ENCODE measurements at regions of chr1 and their contacts with region 1.

Region 1: DNA sequence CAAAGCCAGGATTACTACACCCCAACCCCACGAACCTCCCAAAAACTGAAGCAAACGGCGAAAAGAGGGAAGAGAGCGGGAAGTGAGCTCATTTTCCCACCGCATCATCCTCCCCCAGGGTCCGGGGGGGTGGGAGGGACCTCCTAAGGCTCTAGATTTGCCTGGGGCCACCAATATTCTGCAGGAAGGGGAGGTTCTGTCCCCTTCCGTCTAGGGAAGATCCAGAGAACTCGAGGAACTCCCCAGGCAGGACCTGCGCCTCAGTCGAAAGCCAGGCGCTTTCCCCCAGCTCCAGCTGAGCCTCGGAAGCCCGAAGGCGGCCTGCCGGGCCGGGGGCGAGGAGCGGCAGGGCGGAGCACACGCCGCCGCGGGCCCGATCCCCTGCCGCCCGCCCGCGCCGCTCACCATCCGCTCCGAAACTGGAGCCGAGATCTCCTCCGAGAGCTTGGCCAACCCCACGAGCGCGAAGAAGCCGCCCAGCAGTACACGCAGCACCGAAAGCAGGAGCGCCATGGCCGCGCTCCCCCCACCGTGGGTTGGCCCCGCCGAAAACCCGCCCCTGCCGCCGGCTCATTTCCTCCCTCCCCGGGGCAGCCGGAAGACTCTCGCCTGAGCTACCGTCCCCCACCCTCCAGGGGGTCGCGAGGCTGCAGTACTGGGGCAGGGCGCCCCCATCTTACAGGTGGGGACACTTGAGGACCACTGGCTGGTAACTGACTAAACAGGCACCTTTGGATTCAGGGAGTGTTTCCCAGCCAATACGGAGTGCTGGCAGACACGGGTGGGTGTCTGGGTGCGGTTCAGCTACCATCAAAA is at the start of gene TMEM35B:
- DNase-seq: no peak
- H3K4me3 ChIP-seq: peak within 1 kb of the TSS; percentile 79 to 95 (median 89)
- H3K27ac ChIP-seq: peak within 1 kb of the TSS; percentile 89 to 97 (median 94)
- H3K4me1 ChIP-seq: peaks cover 20 to 31% (median 25%) of the 10 kb centered on the region in 4 donors
- H3K27me3 ChIP-seq: no peaks in the 10 kb centered on the region
- CTCF ChIP-seq: peak in 2 of 3 experiments; percentile 11 to 32
- EP300 ChIP-seq: no peak
- POLR2A ChIP-seq: peak; percentile 55
- total RNA-seq, gene TMEM35B: 26.1 to 38.6 (median 32.9) TPM

Region 2: GRCh38 chr1:34852677-34853217 is 132.3 kb before region 1 on chr1:
- intact Hi-C with region 1: loop called (anchors 10 kb)
- DNase-seq: peak; percentile 94
- H3K4me3 ChIP-seq: peak overlapping the region in 1 of 4 donors; percentile 1
- H3K27ac ChIP-seq: peak overlapping the region; percentile 67 to 79 (median 72)
- H3K4me1 ChIP-seq: peaks cover 25 to 50% (median 42%) of the 10 kb centered on the region in 4 donors
- H3K27me3 ChIP-seq: no peaks in the 10 kb centered on the region
- CTCF ChIP-seq: peak; percentile 86 to 97 (median 97)
- EP300 ChIP-seq: no peak
- POLR2A ChIP-seq: no peak

Measured in esophagus muscularis mucosa (tissue), 4 donors.